IMR-90 (cell line): ENCODE measurements at regions of chr1 and their contacts with region 1.

Region 1: DNA sequence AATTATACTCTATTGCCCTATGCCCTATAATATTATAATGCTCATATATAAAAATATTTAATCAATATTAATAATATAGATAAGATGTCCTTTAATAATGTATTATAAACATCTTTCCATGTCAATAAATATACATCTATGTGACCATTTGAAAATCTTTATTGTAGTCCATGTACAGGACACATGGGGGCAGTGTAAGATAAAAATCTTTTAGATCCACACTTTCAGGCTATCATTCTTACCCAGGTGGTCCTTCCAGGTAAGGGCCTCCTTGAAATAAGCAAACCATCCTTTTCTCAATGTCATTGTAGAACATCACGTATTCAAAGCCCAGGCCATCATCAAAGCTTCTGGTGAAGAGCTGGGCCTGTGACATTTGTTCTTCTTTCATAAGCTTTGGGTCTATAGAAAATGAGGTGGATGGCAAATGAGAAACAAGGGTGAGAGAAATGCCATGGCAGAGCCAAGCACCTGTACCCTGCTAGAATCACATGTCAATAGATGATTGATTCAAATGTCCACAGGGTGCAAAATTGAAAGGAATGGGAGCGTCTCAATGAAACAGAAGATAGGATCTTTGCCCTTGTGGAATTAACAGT is 20.2 kb downstream of the THEM4 start:
- DNase-seq: no peak
- ATAC-seq: no peak
- H3K4me3 ChIP-seq: no peak overlapping the region
- H3K27ac ChIP-seq: no peak overlapping the region
- H3K4me1 ChIP-seq: peaks cover 2% of the 10 kb centered on the region
- H3K27me3 ChIP-seq: no peaks in the 10 kb centered on the region
- CTCF ChIP-seq: peak; percentile 45
- POLR2A ChIP-seq: no peak
- RAD21 ChIP-seq: peak; percentile 33

Region 2: DNA sequence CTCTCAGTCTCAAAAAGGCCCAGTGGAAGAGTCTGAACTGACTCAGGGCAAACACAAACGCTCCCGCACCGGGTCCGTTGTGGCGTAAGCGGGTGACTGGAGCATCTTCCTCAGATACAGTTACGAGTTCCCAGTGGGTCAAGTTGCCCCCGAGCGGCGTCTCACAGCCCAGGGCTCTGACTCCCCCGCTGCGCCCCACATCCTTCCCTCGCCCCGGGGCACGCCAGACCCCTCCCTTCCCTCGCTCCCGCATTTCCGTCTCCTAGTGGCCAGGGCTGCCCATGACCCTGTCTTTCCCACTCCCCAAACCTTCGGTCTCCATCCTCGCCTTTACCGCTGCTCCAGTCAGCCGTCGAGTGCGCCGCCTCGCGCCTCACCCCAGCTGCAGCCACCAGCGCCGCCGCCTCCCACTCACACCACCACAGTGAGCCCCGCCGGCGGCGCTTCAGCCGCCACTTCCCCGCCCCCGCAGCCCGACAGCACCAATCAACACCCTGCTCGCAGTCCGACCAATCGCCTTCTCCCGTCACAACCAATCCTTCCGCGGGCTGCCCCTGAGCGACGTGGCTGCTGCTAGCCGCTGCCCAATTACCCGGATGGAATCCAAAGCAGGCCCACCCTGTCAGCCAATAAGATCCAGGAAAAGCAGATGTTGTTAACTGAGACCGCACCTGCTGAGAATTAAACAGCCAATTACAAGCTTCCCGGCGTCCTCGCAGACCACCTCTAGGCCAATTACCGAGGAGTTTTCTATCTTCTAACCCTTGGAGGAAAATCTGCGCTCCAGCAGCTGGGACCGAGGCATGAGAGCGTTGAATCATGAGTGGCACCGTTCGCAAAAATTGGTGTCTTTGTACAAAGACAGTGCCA is 98.8 kb before region 1 on chr1 and contains the start of gene TDRKH:
- CTCF ChIA-PET with region 1: no interaction called
- POLR2A ChIA-PET with region 1: no interaction called
- dilution Hi-C with region 1: loop called (anchors 25 kb)
- in situ Hi-C with region 1: no loop called
- intact Hi-C with region 1: no loop called
- DNase-seq: peak; percentile 99
- ATAC-seq: peak; percentile 99
- H3K4me3 ChIP-seq: peak within 1 kb of the TSS; percentile 55
- H3K27ac ChIP-seq: no peak within 1 kb of the TSS
- H3K4me1 ChIP-seq: peaks cover 2% of the 10 kb centered on the region
- H3K27me3 ChIP-seq: peaks cover 5% of the 10 kb centered on the region; the same call in 1 of the 2 replicates
- CTCF ChIP-seq: peak; percentile 26; the same call in 1 of the 2 replicates
- POLR2A ChIP-seq: no peak
- RAD21 ChIP-seq: 0 out of 2 replicates have a peak, but pooled peaks have one; percentile 18
- total RNA-seq, gene TDRKH: 2.2 TPM in 2 replicates